ENCODE measurements at regions of chr21 and their contacts with region 1.

Region 1: DNA sequence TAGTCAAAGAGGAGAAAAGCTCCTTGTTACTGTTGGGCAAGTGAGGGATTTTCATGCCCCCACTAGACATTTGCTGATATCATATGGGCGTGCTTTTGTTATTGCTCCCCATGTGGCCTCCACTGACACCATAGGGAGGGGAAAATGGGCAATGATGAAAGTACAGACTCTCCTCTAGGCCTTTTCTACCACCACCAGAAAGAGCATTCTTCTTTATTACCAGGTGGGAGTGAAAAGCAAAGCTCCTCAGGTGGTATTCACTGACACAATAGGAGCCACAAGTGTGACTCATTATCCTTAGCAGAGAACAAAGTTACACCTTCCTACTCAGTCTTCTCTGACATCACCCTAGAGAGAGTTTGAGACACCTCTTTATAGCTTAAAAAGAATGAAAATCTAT is 667.1 kb downstream of the LTN1 start:
- DNase-seq: no peak
- ATAC-seq: no peak
- H3K4me3 Mint-ChIP-seq: no peak overlapping the region
- H3K27ac Mint-ChIP-seq: no peak overlapping the region
- H3K4me1 Mint-ChIP-seq: no peaks in the 10 kb centered on the region
- H3K27me3 Mint-ChIP-seq: no peaks in the 10 kb centered on the region

Region 2: GRCh38 chr21:28336314-28336713 is 10.7 kb after region 1 on chr21:
- CTCF ChIA-PET with region 1: interaction called, 12 read pairs
- POLR2A ChIA-PET with region 1: no interaction called
- intact Hi-C with region 1: no loop called
- DNase-seq: no peak
- ATAC-seq: no peak
- H3K4me3 Mint-ChIP-seq: no peak overlapping the region
- H3K27ac Mint-ChIP-seq: no peak overlapping the region
- H3K4me1 Mint-ChIP-seq: no peaks in the 10 kb centered on the region
- H3K27me3 Mint-ChIP-seq: no peaks in the 10 kb centered on the region